ENCODE measurements at regions of chr9 and their contacts with region 1.

Region 1: DNA sequence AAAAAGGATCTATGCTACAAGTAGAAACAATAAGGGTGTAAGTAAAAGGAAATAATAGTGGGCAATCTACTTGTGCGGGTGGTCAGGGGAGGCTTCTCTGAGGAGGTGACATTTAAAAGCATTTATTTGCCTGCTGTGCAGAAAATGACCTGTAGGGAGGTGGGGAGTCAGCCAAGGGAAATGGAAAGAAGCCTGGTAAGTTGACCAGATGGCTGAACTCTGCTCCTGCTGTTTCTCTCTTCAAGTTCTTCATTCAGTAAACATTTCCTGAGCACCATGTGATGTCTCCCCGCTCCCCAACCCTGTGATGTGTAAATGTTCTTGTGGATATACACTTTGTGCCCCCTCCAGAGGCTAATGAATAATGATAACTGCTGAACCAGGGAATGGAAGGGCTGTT is 9.9 kb upstream of the SPIN1 start:
- DNase-seq: no peak
- H3K4me3 ChIP-seq: no peak overlapping the region
- H3K27ac ChIP-seq: no peak overlapping the region
- H3K4me1 ChIP-seq: no peaks in the 10 kb centered on the region
- H3K27me3 ChIP-seq: no peaks in the 10 kb centered on the region
- CTCF ChIP-seq: no peak
- POLR2A ChIP-seq: no peak

Region 2: DNA sequence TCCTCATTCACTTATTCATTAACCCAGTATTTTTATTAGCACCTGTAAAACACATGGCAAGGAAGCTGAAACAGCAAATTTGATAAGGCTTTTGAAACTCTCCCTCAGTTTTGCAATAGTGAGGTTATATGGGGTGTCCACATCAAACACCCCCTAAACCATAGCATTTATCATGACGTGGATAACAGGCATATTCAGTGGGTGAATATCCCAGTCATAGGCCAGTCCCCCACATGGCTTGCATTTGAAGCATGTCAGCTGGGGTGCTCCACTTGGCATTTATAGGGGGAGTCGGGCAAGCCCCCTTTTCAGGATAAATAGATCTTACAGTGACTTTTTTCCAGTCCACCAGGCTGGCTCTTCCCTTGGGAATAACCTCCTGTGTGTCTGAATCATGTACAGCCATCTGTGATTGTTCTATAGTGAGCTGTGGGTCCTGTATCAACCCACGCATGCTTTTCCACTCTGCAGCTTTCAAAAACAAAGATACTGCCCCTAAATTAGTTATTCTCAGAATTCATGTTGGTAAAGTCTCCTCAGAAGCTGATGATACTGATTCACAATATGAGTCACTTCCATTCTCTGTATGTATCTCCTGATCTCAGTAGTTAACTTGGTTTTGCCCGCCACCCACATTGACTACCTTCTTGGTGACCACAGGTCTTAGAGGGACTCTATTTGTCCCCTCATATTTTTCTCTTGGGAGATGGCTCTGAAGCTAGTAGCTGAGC is 74.4 kb before region 1 on chr9:
- intact Hi-C with region 1: loop called (anchors 2 kb)
- DNase-seq: no peak
- H3K4me3 ChIP-seq: no peak overlapping the region
- H3K27ac ChIP-seq: no peak overlapping the region
- H3K4me1 ChIP-seq: no peaks in the 10 kb centered on the region
- H3K27me3 ChIP-seq: no peaks in the 10 kb centered on the region
- CTCF ChIP-seq: no peak
- POLR2A ChIP-seq: no peak

Region 3: GRCh38 chr9:88388172-88388885 is 10.0 kb after region 1 on chr9 and contains the start of gene SPIN1:
- intact Hi-C with region 1: no loop called
- DNase-seq: peak; percentile 73
- H3K4me3 ChIP-seq: peak within 1 kb of the TSS; percentile 69 to 95 (median 91)
- H3K27ac ChIP-seq: peak within 1 kb of the TSS; percentile 97 to 99
- H3K4me1 ChIP-seq: no peaks in the 10 kb centered on the region
- H3K27me3 ChIP-seq: no peaks in the 10 kb centered on the region
- CTCF ChIP-seq: peak in 1 of 3 donors; percentile 84
- POLR2A ChIP-seq: no peak
- total RNA-seq, gene SPIN1: 71.8 to 125 (median 103) TPM

Region 4: GRCh38 chr9:88399966-88400365 is 21.6 kb after region 1 on chr9:
- intact Hi-C with region 1: no loop called
- DNase-seq: no peak
- H3K4me3 ChIP-seq: no peak overlapping the region
- H3K27ac ChIP-seq: no peak overlapping the region
- H3K4me1 ChIP-seq: peaks cover 0 to 4% of the 10 kb centered on the region in 2 donors
- H3K27me3 ChIP-seq: no peaks in the 10 kb centered on the region
- CTCF ChIP-seq: no peak
- POLR2A ChIP-seq: no peak